ENCODE measurements at regions of chr20 and their contacts with region 1.

Region 1: DNA sequence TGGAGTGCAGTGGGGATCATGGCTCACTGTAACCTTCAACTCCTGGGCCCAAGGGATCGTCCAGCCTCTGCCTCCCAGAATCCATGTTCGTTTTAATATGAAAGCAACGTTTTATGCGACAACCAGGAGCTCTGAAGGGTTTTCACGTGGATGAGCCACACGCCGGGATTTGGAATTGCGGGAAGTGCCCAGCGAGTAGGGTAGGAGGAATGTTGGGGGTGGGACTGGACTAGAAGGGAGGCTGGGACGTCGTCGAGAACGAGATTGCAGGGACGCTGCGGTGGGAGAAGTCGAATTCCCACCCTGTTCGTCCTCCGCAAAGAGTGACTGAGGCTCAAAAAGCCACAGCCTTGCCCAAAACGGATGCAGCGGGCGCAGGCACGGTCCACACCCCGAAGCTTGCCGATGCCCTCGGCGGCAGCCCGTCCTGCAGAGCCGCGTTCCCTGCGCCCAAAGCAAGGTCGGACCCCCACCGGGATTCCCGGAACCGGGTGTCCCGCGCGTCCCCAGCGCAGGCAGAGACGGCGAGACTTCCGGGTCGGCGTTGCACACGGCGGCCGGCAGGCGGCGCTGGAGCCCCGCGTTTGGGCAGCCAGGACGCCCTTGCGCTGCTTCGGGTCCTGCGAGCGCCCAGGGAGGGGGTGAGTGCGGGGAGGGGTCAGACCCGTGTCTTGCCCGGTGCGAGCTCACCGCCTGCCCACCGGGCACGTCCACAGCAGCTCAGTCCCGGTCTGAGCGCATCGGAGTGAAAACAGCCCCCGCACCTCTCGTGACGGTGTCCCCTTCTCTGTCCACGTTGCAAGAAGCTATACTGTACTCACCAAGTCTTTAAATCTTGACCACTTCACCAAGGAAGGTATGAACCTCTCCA is 87.8 kb downstream of the DHX35 start:
- DNase-seq: peak; percentile 80
- H3K4me3 ChIP-seq: peak overlapping the region; percentile 56
- H3K27ac ChIP-seq: peak overlapping the region; percentile 57
- H3K4me1 ChIP-seq: no peaks in the 10 kb centered on the region
- H3K27me3 ChIP-seq: no peaks in the 10 kb centered on the region
- CTCF ChIP-seq: peak; percentile 98

Region 2: GRCh38 chr20:38926142-38926933 is 123.6 kb before region 1 on chr20 and contains the start of gene FAM83D:
- CTCF ChIA-PET with region 1: no interaction called
- POLR2A ChIA-PET with region 1: no interaction called
- intact Hi-C with region 1: loop called (anchors 1 kb)
- DNase-seq: peak; percentile 99
- H3K4me3 ChIP-seq: peak within 1 kb of the TSS; percentile 94
- H3K27ac ChIP-seq: peak within 1 kb of the TSS; percentile 94
- H3K4me1 ChIP-seq: peaks cover 9% of the 10 kb centered on the region
- H3K27me3 ChIP-seq: peaks cover 3% of the 10 kb centered on the region
- CTCF ChIP-seq: no peak; the same call in 1 of the 2 replicates
- total RNA-seq, gene FAM83D: 67.2 and 74.0 TPM in 2 replicates

Region 3: DNA sequence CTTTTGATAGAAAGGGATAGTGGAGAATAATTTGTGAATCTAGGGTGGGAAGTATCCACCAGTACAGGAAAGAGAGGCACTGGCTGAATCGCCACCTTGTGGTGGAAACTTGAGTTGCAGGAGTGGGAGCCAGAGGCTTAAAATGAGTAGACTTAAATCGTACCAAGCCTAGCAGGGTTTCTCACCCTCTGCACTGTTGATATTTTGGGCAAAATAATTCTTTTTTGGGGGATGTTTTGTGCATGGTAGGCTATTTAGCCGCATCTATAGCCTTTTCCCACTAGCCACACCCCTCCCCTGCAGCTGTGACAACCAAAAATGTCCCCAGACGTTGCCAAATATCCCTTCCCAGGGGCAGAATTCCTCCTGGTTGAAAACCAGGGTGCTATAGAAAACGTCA is 31.3 kb after region 1 on chr20:
- CTCF ChIA-PET with region 1: interaction called, 4 read pairs
- POLR2A ChIA-PET with region 1: no interaction called
- intact Hi-C with region 1: loop called (anchors 1 kb)
- DNase-seq: peak; percentile 78
- H3K4me3 ChIP-seq: no peak overlapping the region
- H3K27ac ChIP-seq: no peak overlapping the region
- H3K4me1 ChIP-seq: no peaks in the 10 kb centered on the region
- H3K27me3 ChIP-seq: peaks cover 22% of the 10 kb centered on the region
- CTCF ChIP-seq: peak; percentile 87